ENCODE measurements at regions of chr1 and their contacts with region 1.

Region 1: DNA sequence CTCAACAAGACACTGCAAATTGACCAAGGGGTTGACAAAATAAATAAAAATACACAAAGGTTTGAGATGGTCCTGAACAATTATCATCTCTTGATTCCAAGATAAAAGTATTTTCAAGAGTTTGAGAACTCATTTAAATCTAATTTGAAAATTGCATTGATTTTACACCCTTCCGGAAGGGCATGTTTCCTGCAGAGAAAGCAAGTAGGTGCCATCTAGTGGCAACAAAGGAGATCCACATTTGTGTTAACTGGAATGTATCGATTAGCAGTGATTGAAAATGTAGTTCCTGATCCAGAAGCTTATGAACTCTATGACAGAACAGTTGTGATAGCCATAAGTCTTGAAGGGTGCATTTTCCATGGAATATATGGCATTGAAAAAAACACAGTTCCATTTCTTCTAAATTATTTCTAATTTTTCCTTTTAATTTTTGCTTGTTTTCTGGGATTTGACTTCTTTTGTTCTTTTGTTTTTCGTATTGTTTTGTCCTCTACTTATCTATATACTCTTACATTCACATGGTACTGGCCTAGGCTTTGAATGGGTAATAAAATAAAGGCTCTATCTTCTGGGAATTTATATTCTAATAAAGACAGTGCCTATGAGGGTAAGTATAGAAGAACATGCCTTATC is 143.7 kb downstream of the DNM3 start:
- DNase-seq: no peak
- ATAC-seq: peak; percentile 66
- H3K4me3 Mint-ChIP-seq: no peak overlapping the region
- H3K27ac Mint-ChIP-seq: peak overlapping the region; percentile 57; the same call in 1 of the 2 replicates
- H3K4me1 Mint-ChIP-seq: peaks cover 3% of the 10 kb centered on the region
- H3K27me3 Mint-ChIP-seq: no peaks in the 10 kb centered on the region
- CTCF ChIP-seq: peak; percentile 61

Region 2: DNA sequence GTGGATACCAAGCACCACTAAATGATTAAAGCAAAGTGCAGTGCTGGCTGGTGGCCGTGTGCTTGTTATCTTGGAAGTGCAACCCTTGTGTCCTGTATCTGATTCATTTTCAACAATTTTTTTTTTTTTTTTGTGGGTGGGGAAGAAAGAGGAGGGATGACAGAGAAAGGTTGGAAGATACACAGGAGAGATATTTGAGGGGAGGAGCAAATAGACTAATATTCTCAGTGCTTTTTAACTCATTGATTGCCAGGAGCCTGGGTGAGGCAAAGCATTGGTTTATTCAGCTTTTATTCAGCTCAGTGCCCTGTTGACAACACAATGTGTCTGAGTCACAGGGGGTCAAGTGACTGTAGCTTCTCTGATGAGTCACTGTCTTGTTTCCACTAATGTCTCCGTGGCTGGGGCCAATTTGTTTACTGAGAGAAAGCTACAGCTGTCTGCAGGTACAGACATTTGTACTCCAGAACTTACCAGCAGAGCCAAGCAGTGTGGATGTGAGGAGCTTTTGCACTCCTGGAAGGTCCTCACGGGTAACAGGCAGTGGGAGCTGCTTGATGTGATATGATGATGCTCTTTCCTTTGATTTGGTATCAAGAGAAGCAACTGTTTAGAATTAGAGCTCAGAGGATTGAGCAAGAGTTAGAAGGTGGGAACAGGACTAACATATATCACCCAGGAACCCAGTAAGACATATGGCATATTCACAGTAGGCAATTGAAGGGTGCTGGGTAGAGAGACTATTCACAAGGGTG is 167.3 kb before region 1 on chr1:
- CTCF ChIA-PET with region 1: interaction called, 11 read pairs
- POLR2A ChIA-PET with region 1: no interaction called
- DNase-seq: no peak
- ATAC-seq: peak; percentile 79
- H3K4me3 Mint-ChIP-seq: no peak overlapping the region
- H3K27ac Mint-ChIP-seq: peak overlapping the region; percentile 54
- H3K4me1 Mint-ChIP-seq: peaks cover 30% of the 10 kb centered on the region
- H3K27me3 Mint-ChIP-seq: no peaks in the 10 kb centered on the region
- CTCF ChIP-seq: no peak

Region 3: DNA sequence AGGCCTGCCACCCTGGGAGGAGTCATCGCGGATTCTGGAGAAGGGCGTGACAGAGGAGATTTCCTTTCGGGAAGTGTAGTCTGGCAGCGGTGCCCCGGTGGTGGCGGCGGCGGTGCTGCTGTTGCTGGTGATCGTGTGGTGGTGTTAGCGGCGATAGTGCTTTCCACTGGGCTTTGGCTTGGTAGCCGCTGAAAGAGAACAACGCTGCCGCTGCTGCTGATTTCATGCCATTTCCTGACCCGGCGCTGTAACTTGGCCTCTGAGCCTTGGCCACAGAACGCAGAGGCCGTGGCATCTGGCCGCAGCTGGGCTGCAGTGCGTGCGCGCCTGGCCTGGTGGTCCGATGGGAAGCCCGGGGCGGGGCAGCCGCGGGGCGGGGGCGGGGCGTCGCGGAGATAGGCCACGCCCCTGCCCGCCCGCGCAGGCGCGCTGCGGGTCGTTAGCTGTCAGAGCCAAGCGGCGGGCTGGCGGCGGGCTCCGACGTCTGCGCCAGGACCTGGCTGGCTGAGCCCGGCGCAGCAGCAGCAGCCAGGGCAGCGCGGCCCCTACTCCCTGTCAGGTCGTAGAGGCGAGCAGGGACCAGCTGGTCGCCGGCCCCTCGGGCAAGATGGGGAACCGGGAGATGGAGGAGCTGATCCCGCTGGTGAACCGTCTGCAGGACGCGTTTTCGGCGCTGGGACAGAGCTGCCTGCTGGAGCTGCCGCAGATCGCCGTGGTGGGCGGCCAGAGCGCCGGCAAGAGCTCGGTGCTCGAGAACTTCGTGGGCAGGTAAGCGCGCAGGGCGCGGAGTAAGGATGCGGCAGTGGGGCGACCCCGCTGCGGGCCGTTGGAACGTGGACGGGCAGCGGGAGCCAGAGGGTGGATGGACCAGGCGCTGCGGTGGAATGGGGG is 143.7 kb before region 1 on chr1 and contains the start of gene DNM3:
- CTCF ChIA-PET with region 1: interaction called, 11 read pairs
- POLR2A ChIA-PET with region 1: no interaction called
- DNase-seq: peak; percentile 82
- ATAC-seq: peak; percentile 88
- H3K4me3 Mint-ChIP-seq: peak within 1 kb of the TSS; percentile 87
- H3K27ac Mint-ChIP-seq: peak within 1 kb of the TSS; percentile 74; the same call in 1 of the 2 replicates
- H3K4me1 Mint-ChIP-seq: peaks cover 19% of the 10 kb centered on the region
- H3K27me3 Mint-ChIP-seq: peaks cover 45% of the 10 kb centered on the region
- CTCF ChIP-seq: no peak
- total RNA-seq, gene DNM3: 0.99 to 1.9 TPM (median 1.6 TPM) in 3 replicates

Region 4: DNA sequence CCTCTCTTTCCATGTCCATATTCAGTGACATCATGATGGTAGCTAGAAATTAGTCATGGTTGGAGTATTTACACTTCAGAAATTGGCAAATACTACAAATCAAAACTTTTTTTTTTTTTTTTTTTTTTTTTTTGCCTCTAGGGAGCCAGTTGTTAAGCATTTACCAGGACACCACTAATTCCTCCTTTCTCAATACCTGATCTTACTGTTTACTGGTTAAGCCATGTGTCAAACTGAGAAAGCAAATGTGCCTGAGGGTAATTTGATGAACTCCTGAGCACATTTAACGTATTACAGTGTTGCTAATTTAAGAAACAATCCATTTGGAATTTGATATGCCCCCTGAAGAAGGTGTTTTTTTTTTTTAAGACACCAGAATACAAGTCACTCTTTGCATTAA is 49.3 kb before region 1 on chr1:
- CTCF ChIA-PET with region 1: no interaction called
- POLR2A ChIA-PET with region 1: no interaction called
- DNase-seq: no peak
- ATAC-seq: no peak
- H3K4me3 Mint-ChIP-seq: no peak overlapping the region
- H3K27ac Mint-ChIP-seq: no peak overlapping the region
- H3K4me1 Mint-ChIP-seq: peaks cover 42% of the 10 kb centered on the region
- H3K27me3 Mint-ChIP-seq: no peaks in the 10 kb centered on the region
- CTCF ChIP-seq: no peak

Region 5: GRCh38 chr1:171966426-171967220 is 18.3 kb before region 1 on chr1:
- CTCF ChIA-PET with region 1: interaction called, 14 read pairs
- POLR2A ChIA-PET with region 1: interaction called, 3 read pairs
- DNase-seq: no peak
- ATAC-seq: peak; percentile 89
- H3K4me3 Mint-ChIP-seq: no peak overlapping the region
- H3K27ac Mint-ChIP-seq: peak overlapping the region; percentile 66
- H3K4me1 Mint-ChIP-seq: peaks cover 53% of the 10 kb centered on the region
- H3K27me3 Mint-ChIP-seq: no peaks in the 10 kb centered on the region
- CTCF ChIP-seq: no peak

Region 6: GRCh38 chr1:172002725-172003345 is 17.9 kb after region 1 on chr1:
- CTCF ChIA-PET with region 1: interaction called, 17 read pairs
- POLR2A ChIA-PET with region 1: no interaction called
- DNase-seq: no peak
- ATAC-seq: no peak
- H3K4me3 Mint-ChIP-seq: no peak overlapping the region
- H3K27ac Mint-ChIP-seq: no peak overlapping the region
- H3K4me1 Mint-ChIP-seq: no peaks in the 10 kb centered on the region
- H3K27me3 Mint-ChIP-seq: no peaks in the 10 kb centered on the region
- CTCF ChIP-seq: no peak